Prostate gland (tissue), 2 donors: ENCODE measurements at regions of chr6 and their contacts with region 1.

Region 1: GRCh38 chr6:70667711-70668498 is at the start of gene SMAP1:
- DNase-seq: peak; percentile 91
- H3K4me3 ChIP-seq: peak within 1 kb of the TSS; percentile 74 to 84
- H3K27ac ChIP-seq: peak within 1 kb of the TSS; percentile 89 to 94
- H3K4me1 ChIP-seq: peaks cover 10% of the 10 kb centered on the region
- H3K27me3 ChIP-seq: no peaks in the 10 kb centered on the region
- CTCF ChIP-seq: peak in 1 of 4 experiments; percentile 10
- POLR2A ChIP-seq: peak; percentile 81
- total RNA-seq, gene SMAP1: 26.0 to 30.3 TPM

Region 2: GRCh38 chr6:70289299-70289698 is 378.6 kb before region 1 on chr6:
- intact Hi-C with region 1: no loop called
- DNase-seq: no peak
- H3K4me3 ChIP-seq: no peak overlapping the region
- H3K27ac ChIP-seq: no peak overlapping the region
- H3K4me1 ChIP-seq: no peaks in the 10 kb centered on the region
- H3K27me3 ChIP-seq: no peaks in the 10 kb centered on the region
- CTCF ChIP-seq: no peak
- POLR2A ChIP-seq: no peak

Region 3: DNA sequence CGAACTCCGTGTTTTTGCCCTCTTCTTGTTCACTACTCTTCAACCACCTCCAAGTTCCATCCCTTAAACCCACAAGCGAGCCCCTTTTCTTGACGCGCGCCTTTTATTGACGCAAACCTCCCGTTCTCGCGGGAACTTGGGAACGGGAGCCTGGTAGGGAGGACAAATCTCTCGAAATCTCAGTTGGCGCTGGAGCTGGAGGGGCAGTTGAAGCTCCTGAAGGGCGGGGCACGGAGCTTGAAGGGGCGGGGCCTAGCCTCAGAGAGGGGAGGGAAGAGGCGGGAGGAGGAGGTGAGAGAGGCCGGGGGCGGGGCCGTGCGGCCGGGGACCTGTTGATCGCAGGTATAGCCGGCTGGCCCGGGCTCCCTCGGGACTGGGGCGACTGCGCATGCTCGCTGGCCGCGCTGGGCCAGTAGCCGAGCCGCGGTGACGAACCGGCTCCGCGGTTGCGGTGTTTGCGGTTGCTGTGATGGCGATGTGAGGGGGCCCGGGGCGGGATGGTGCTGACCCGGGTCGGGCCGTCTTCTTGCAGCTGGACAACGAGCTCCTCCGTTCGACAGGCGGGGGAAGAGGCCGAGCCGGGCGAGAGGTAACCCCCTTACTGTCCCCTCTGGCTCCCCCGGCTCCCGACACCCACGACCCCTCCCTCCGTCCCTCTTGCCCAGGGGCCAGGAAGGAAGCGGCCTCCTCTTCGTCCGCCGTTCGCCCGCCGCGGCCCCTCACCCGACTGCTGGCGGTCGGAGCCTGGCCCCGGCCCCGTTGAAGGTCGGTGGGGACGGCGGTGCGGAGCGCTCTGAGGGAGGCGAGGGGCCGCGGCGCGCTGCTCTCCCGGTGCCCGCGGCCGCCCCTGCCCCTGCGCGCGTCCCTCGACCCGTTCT is 254.6 kb before region 1 on chr6 and contains the start of gene FAM135A:
- intact Hi-C with region 1: loop called (anchors 10 kb)
- DNase-seq: peak; percentile 99
- H3K4me3 ChIP-seq: peak within 1 kb of the TSS; percentile 92 to 97
- H3K27ac ChIP-seq: peak within 1 kb of the TSS; percentile 90 to 93
- H3K4me1 ChIP-seq: no peaks in the 10 kb centered on the region
- H3K27me3 ChIP-seq: no peaks in the 10 kb centered on the region
- CTCF ChIP-seq: peak in 2 of 4 experiments; percentile 7 to 17
- POLR2A ChIP-seq: peak; percentile 92
- total RNA-seq, gene FAM135A: 66.3 to 117 TPM